ENCODE measurements at regions of chr6 and their contacts with region 1.

Region 1: GRCh38 chr6:85678602-85679444 is 36.1 kb upstream of the SYNCRIP start:
- DNase-seq: peak; percentile 98
- ATAC-seq: peak; percentile 90
- H3K4me3 Mint-ChIP-seq: peak overlapping the region; percentile 94
- H3K27ac Mint-ChIP-seq: peak overlapping the region; percentile 94
- H3K4me1 Mint-ChIP-seq: peaks cover 35% of the 10 kb centered on the region
- H3K27me3 Mint-ChIP-seq: no peaks in the 10 kb centered on the region
- CTCF ChIP-seq: no peak

Region 2: DNA sequence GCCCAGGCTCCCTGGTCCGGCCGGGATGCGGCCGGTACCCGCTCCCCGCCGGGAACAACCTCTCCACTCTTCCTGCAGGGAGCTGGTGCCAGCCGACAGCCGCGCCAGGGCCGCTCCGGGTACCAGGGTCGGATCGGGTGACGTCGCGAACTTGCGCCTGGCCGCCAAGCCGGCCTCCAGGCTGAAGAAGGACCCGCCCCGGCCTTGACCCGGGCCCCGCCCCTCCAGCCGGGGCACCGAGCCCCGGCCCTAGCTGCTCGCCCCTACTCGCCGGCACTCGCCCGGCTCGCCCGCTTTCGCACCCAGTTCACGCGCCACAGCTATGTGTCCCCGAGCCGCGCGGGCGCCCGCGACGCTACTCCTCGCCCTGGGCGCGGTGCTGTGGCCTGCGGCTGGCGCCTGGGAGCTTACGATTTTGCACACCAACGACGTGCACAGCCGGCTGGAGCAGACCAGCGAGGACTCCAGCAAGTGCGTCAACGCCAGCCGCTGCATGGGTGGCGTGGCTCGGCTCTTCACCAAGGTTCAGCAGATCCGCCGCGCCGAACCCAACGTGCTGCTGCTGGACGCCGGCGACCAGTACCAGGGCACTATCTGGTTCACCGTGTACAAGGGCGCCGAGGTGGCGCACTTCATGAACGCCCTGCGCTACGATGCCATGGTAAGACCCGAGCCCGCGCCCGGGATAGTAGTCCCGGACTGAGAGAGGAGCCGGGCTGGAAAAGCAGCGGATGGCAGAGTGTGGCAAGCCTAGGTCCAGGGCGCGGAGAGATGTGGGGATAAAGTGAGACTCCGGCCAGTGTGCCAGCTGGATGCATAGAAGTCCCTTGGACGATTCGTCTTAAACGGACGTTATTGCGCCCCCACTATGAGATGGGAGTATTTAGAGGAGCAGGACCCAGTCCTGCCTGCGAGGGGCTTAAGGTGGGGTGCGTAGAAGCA is 228.7 kb before region 1 on chr6 and contains the start of gene NT5E:
- CTCF ChIA-PET with region 1: interaction called, 3 read pairs
- POLR2A ChIA-PET with region 1: interaction called, 13 read pairs
- intact Hi-C with region 1: no loop called
- DNase-seq: peak; percentile 78
- ATAC-seq: peak; percentile 59
- H3K4me3 Mint-ChIP-seq: peak within 1 kb of the TSS; percentile 91
- H3K27ac Mint-ChIP-seq: peak within 1 kb of the TSS; percentile 96
- H3K4me1 Mint-ChIP-seq: peaks cover 54% of the 10 kb centered on the region
- H3K27me3 Mint-ChIP-seq: no peaks in the 10 kb centered on the region
- CTCF ChIP-seq: no peak
- total RNA-seq, gene NT5E: 5.2 to 6.7 TPM

Region 3: GRCh38 chr6:85460921-85461797 is 217.7 kb before region 1 on chr6:
- CTCF ChIA-PET with region 1: no interaction called
- POLR2A ChIA-PET with region 1: interaction called, 24 read pairs
- intact Hi-C with region 1: loop called (anchors 10 kb)
- DNase-seq: peak; percentile 82
- ATAC-seq: peak; percentile 55
- H3K4me3 Mint-ChIP-seq: peak overlapping the region; percentile 51
- H3K27ac Mint-ChIP-seq: peak overlapping the region; percentile 97
- H3K4me1 Mint-ChIP-seq: peaks cover 97% of the 10 kb centered on the region
- H3K27me3 Mint-ChIP-seq: no peaks in the 10 kb centered on the region
- CTCF ChIP-seq: no peak

Region 4: DNA sequence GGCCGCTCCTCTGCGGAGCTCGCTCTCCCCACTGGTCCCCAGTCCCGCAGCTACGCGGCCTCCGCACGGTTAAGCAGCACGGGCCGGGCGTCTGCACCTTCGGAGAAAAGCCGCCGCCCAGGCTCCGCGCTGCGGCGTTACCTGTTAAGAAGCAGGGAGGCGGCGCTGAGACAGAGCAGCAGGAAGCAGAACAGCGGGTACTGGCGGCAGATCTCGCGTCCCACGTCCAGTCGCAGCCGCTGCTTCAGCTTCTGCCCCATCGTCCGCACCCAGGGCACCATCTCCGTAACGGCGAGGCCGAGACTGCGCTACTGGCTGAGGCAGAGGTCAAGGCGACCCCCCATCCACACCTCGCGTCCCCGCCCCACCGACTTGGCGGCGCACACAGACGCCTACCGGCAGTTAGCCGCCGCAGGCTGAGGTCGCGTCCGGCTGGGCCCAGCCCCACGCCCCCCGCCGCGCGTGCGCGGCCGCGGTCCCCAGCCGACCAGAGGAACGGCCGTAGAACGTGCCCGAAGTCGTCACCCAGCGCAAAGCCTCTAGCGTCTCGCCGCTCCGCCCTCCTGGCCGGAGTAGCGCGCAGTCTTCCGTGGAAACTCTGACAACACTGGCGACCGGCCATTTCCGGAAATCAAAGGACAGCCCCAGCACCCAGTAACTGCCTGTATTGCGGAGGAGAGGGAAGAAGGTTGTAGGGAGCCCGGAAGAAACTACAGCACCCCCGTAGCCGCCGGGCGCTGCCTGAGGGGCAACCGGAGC is 85.2 kb before region 1 on chr6 and contains the start of gene SNX14:
- CTCF ChIA-PET with region 1: interaction called, 3 read pairs
- POLR2A ChIA-PET with region 1: interaction called, 55 read pairs
- intact Hi-C with region 1: loop called (anchors 2 kb)
- DNase-seq: peak; percentile 88
- ATAC-seq: peak; percentile 84
- H3K4me3 Mint-ChIP-seq: peak within 1 kb of the TSS; percentile 99
- H3K27ac Mint-ChIP-seq: peak within 1 kb of the TSS; percentile 97
- H3K4me1 Mint-ChIP-seq: peaks cover 43% of the 10 kb centered on the region
- H3K27me3 Mint-ChIP-seq: no peaks in the 10 kb centered on the region
- CTCF ChIP-seq: no peak
- total RNA-seq, gene SNX14: 53.9 to 54.1 TPM

Region 5: DNA sequence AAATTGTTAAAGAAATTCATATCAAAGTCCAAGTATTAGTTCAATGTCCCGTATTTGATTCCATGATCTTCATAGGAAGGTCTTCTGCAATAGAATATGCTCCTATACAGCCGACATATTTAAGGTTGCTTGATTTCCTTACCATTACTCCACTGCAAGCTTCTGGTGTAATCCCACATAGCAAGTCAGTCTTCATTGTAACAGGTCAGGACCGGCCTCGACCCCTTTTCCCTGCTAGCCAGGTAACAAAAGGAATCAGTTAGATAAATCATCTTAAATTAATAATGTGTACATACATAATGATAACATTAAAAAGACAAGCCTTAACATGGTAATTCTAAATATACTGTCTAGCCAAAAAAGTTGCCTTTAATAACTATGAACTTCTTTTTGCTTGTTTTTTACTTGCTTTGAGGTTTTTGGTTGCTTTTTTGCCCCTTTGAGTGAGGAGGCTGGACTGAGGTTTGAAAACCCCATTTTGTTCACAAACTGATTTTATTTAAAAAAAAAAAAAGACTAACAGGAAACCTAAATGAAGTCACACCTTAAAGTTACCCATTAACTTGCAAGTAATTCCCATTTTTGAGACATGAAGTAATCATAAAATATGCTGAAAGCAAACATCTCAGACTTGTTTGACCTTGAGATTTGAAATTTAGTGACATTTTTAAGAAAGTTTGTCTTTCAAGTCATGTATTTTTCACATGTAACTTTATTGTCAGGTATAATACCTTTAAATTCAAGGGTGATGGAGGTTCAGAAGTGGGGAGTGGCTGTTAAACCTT is 65.9 kb before region 1 on chr6:
- CTCF ChIA-PET with region 1: interaction called, 3 read pairs
- POLR2A ChIA-PET with region 1: interaction called, 13 read pairs
- intact Hi-C with region 1: no loop called
- DNase-seq: no peak
- ATAC-seq: no peak
- H3K4me3 Mint-ChIP-seq: no peak overlapping the region
- H3K27ac Mint-ChIP-seq: no peak overlapping the region
- H3K4me1 Mint-ChIP-seq: peaks cover 8% of the 10 kb centered on the region
- H3K27me3 Mint-ChIP-seq: no peaks in the 10 kb centered on the region
- CTCF ChIP-seq: no peak

Region 6: DNA sequence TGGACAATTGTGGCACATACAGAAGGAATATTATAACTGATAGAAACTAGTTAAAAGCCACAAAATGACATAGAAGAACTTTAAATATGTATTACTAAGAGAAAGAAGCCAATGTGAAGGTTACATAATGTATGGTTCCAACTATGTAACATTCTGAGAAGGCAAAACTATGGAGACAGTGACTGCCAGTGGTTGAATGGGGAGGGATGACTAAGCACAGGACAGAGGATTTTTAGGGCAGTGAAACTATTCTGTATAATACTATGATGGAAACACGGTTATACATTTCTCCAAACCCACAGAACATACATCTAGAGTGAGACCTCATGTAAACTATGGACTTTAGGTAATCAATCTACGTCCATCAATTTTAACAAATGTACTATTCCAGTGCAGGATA is 58.5 kb before region 1 on chr6:
- CTCF ChIA-PET with region 1: no interaction called
- POLR2A ChIA-PET with region 1: interaction called, 17 read pairs
- intact Hi-C with region 1: loop called (anchors 10 kb)
- DNase-seq: no peak
- ATAC-seq: no peak
- H3K4me3 Mint-ChIP-seq: no peak overlapping the region
- H3K27ac Mint-ChIP-seq: peak overlapping the region; percentile 4
- H3K4me1 Mint-ChIP-seq: peaks cover 34% of the 10 kb centered on the region
- H3K27me3 Mint-ChIP-seq: no peaks in the 10 kb centered on the region
- CTCF ChIP-seq: no peak

Region 7: DNA sequence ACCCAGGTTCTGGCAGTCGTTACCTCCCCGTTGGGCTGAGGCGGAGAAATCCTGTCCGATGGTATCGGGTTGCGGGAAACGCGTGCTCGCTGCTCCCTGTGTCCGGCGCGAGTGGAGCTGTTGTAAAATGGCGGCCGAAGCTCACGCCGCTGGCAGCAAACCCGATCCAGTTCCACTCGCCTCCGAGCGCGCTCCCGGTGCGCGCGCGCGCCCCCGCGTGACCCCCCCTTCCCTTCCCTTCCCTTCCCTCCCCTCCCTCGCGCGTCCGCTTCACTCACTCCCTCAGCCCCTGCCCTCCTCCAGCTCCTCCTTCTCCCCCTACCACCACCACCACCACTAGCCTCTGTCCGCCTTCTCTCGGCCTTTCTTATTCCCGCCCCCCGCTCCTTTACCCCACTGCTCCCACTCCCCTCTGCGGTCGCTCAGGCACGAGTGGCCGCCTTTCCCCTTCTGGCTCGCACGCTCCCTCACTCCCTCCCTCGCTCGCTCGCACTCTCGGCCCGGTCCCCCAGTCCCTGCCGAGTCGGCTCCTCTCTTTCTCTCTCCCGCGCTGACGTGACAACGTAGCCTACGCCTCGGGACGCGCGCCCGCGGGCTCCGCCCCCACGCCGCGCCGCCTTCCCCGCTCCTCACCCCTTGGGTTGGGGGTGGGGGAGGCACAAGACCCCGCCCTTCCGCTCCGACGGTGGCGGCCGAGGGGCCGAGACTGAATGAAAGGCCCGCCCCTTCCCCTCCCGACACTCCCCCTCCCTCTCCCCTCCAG is 35.9 kb before region 1 on chr6 and contains the start of gene SYNCRIP:
- CTCF ChIA-PET with region 1: interaction called, 31 read pairs
- POLR2A ChIA-PET with region 1: interaction called, 913 read pairs
- intact Hi-C with region 1: loop called (anchors 2 kb)
- DNase-seq: peak; percentile 97
- ATAC-seq: peak; percentile 88
- H3K4me3 Mint-ChIP-seq: peak within 1 kb of the TSS; percentile 96
- H3K27ac Mint-ChIP-seq: peak within 1 kb of the TSS; percentile 99
- H3K4me1 Mint-ChIP-seq: peaks cover 36% of the 10 kb centered on the region
- H3K27me3 Mint-ChIP-seq: no peaks in the 10 kb centered on the region
- CTCF ChIP-seq: no peak
- total RNA-seq, gene SYNCRIP: 167 to 179 TPM

Region 8: GRCh38 chr6:85726206-85726605 is 47.4 kb after region 1 on chr6:
- CTCF ChIA-PET with region 1: no interaction called
- POLR2A ChIA-PET with region 1: no interaction called
- intact Hi-C with region 1: no loop called
- DNase-seq: no peak
- ATAC-seq: no peak
- H3K4me3 Mint-ChIP-seq: no peak overlapping the region
- H3K27ac Mint-ChIP-seq: no peak overlapping the region
- H3K4me1 Mint-ChIP-seq: no peaks in the 10 kb centered on the region
- H3K27me3 Mint-ChIP-seq: peaks cover 6% of the 10 kb centered on the region
- CTCF ChIP-seq: no peak

Measured in activated CD8-positive, alpha-beta T cell treated with anti-CD3 and anti-CD28 coated beads for 36 hours (primary cell).